ENCODE measurements at regions of chr3 and their contacts with region 1.

Region 1: GRCh38 chr3:16264708-16265454 is at the starts of genes DPH3 and OXNAD1:
- DNase-seq: peak; percentile 99
- ATAC-seq: peak; percentile 96
- H3K4me3 Mint-ChIP-seq: peak within 1 kb of the TSS; percentile 100
- H3K27ac Mint-ChIP-seq: peak within 1 kb of the TSS; percentile 100
- H3K4me1 Mint-ChIP-seq: peaks cover 25% of the 10 kb centered on the region
- H3K27me3 Mint-ChIP-seq: no peaks in the 10 kb centered on the region
- CTCF ChIP-seq: no peak
- total RNA-seq, gene DPH3: 13.4 and 14.7 TPM in 2 replicates
- total RNA-seq, gene OXNAD1: 5.5 and 8.7 TPM in 2 replicates

Region 2: DNA sequence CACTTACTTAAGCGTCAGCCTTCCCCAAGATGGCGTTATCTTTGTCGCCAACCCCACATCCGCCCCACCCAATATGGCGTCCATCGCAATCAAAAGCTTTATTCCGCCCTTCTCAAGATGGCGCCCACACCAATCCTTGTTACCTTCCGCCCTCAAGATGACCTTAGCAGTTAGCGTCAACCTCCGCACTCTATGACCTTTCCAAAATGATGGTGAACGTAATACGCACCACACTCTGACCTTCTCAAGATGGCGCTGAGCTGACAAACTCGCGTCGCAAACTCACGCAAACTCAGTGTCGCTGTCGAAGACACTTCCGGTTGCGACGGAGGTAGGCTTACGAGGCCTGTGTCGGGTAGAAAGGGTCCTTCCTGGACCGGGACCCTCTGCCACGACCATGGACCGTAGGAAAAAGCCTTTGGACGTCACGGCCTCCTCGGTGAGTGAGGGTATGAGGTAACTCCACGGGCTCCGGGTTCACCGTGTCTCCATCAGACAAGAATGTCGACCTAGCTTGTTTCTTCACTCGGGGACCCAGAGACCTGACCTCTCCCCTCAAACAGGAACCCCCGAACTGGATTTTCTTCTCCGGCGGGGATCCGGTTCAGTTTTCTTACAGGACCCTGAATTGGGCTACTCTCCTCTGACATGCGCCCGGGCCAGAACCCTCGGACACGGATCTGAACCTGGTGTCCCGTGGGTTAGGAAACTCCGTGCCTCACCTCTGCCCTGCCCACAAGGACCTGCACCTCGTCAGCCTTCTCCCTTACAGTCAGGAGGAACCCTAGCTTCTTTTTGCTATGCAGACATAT is 1613.2 kb before region 1 on chr3 and contains the start of gene CCDC174:
- CTCF ChIA-PET with region 1: no interaction called
- POLR2A ChIA-PET with region 1: no interaction called
- intact Hi-C with region 1: loop called (anchors 10 kb)
- DNase-seq: peak; percentile 86
- ATAC-seq: peak; percentile 97
- H3K4me3 Mint-ChIP-seq: peak within 1 kb of the TSS; percentile 95
- H3K27ac Mint-ChIP-seq: peak within 1 kb of the TSS; percentile 93
- H3K4me1 Mint-ChIP-seq: peaks cover 34% of the 10 kb centered on the region
- H3K27me3 Mint-ChIP-seq: no peaks in the 10 kb centered on the region
- CTCF ChIP-seq: no peak
- total RNA-seq, gene CCDC174: 30.2 and 32.4 TPM in 2 replicates

Region 3: DNA sequence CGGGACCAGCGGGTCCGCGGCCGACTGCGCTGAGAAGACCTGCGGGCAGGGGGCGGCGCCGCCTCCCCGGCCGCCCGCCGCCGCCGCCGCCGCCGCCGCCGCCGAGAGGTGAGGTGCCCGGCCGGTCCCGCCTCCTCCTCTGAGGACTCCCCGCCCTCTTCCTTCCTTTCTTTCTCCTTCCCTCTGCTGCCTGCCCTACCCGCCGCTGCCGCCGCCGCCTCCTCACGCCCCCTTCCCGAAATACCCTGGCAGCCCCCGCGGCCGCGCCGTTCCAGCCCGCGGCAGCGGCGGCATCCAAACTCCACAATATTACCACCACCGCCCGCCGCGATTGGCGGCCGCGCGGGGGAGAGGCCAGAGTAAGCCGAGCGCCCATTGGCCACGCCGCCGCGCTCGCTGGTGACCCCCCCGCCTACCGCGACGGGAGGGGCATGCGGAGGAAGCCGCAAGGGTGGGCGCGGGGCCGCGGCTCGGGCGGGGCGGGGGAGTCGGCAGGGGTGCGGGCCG is 405.3 kb before region 1 on chr3:
- CTCF ChIA-PET with region 1: no interaction called
- POLR2A ChIA-PET with region 1: no interaction called
- intact Hi-C with region 1: loop called (anchors 2 kb)
- DNase-seq: peak; percentile 77
- ATAC-seq: peak; percentile 77
- H3K4me3 Mint-ChIP-seq: peak overlapping the region; percentile 99
- H3K27ac Mint-ChIP-seq: peak overlapping the region; percentile 95
- H3K4me1 Mint-ChIP-seq: peaks cover 27% of the 10 kb centered on the region
- H3K27me3 Mint-ChIP-seq: no peaks in the 10 kb centered on the region
- CTCF ChIP-seq: no peak

Region 4: DNA sequence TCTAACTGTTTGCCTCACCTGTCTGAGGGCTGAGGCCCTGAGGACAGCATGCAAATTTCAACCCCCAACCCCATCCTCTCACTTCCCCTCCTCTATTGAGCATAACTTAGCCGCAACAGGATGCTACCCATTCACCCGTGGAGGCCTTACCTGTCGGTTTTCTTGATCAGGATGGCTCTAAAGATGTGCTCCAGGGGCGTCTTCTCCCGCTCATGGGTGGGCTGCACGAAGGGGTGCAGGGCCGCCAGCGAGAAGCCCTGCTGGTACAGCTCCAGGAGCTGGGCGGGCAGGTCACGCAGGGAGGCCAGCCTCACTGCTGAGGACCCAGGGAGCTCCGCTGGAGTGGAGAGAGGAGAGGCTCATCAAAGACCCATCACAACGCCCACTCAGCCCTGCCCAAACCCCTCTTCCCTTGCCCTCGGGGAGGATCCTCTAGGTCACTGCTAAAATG is 168.8 kb after region 1 on chr3:
- CTCF ChIA-PET with region 1: no interaction called
- POLR2A ChIA-PET with region 1: no interaction called
- intact Hi-C with region 1: loop called (anchors 1 kb)
- DNase-seq: peak; percentile 58
- ATAC-seq: peak; percentile 63
- H3K4me3 Mint-ChIP-seq: peak overlapping the region; percentile 68
- H3K27ac Mint-ChIP-seq: peak overlapping the region; percentile 74
- H3K4me1 Mint-ChIP-seq: peaks cover 63% of the 10 kb centered on the region
- H3K27me3 Mint-ChIP-seq: no peaks in the 10 kb centered on the region
- CTCF ChIP-seq: no peak

Region 5: DNA sequence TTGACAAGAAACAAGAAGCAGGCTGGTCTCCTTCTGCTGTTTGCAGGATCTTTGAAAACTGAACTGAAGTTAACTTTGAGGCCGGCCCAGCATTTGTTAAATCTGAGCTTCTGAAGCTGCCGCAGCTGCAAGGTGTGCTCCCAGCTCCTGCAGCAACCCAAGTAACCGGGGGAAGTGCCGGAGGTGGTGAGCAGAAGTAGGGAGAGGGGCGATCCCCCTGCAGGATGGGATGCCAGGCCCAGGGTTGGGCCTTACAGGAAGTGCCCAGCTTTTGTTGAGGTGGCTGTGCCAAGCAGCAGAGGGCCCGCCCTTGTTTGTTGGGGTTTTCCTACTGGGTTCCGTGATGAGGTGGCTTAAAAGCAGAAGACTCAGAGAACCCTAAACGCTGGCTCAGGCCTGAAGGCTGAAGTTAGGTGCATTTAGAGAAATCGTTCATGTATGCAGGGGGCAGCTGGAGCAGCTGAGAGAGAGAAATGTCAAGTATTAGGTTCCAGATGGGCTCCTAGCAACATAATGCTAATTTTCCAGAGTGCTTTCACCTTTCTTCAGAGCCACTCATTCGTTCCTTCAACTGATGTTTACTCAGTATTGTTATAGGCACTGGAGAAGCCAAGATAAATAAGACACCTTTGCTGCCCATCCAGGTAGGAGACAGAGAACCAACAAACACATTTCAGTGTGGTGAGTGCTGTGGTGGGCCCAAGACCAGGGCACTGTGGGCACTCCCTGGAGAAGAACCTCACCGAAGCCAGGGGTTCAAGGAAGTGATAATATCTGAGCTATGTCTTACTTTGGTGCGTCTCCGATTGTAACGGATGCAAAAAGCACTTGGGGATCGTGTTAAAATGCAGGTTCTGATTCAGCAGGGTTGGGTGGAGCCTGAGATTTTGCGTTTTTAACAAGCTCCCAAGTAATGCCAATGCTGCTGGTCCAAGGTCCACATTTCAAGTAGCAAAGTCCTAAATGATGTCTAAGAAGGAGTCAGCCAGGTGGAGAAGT is 577.7 kb after region 1 on chr3:
- CTCF ChIA-PET with region 1: no interaction called
- POLR2A ChIA-PET with region 1: no interaction called
- intact Hi-C with region 1: loop called (anchors 5 kb)
- DNase-seq: peak; percentile 66
- ATAC-seq: peak; percentile 92
- H3K4me3 Mint-ChIP-seq: peak overlapping the region; percentile 75
- H3K27ac Mint-ChIP-seq: peak overlapping the region; percentile 98
- H3K4me1 Mint-ChIP-seq: peaks cover 67% of the 10 kb centered on the region
- H3K27me3 Mint-ChIP-seq: no peaks in the 10 kb centered on the region
- CTCF ChIP-seq: no peak

Region 6: DNA sequence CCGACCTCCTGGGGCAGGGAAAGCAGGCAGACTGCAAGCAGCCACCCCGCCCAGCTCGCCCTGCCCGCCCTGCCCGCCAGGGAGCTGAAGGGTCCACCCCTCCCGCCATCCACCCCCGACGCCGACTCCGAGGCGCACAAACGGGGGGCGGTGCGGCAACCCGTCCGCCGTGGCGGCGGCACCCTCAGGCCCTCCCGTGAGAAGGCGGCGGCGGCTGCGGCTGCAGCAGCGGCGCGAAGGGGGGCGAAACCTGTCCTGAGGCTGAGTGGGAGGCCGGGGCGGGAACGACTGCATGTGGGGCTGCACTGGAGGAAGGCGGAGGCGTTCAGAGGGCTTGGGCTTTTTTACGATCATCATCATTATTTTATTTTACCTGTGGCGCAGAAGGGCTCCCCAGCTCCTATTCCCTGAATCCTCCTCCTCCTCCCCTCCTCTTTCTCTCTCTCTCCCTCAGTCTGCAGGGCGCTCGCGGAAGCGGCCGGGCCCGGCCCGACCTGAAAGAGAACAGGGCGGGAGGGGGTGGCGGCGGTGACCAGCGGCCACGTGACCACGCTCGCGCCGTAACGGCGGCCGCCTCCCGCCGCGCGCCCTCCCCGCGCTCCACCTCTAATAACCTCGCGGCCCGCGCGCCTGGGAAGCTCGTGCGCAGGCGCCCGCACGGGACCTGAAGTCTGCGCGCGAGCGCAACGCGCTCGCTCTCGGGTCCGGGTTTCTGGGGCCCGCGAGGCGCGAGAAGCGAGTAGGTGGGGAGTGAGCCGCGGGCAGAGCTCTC is 1477.4 kb after region 1 on chr3 and contains the start of gene TBC1D5:
- CTCF ChIA-PET with region 1: no interaction called
- POLR2A ChIA-PET with region 1: no interaction called
- intact Hi-C with region 1: loop called (anchors 1 kb)
- DNase-seq: peak; percentile 91
- ATAC-seq: peak; percentile 83
- H3K4me3 Mint-ChIP-seq: peak within 1 kb of the TSS; percentile 96
- H3K27ac Mint-ChIP-seq: peak within 1 kb of the TSS; percentile 97
- H3K4me1 Mint-ChIP-seq: peaks cover 57% of the 10 kb centered on the region
- H3K27me3 Mint-ChIP-seq: no peaks in the 10 kb centered on the region
- CTCF ChIP-seq: no peak
- total RNA-seq, gene TBC1D5: 102 and 106 TPM in 2 replicates

Measured in activated B cell treated with CpG ODN at 0.5 μM for 24 hours (primary cell).